ENCODE measurements at regions of chr3 and their contacts with region 1.

Region 1: GRCh38 chr3:10224784-10225665 is 23.2 kb upstream of the TATDN2 start:
- DNase-seq: peak; percentile 59 to 67 (median 60)
- H3K4me3 ChIP-seq: no peak overlapping the region
- H3K4me3 Mint-ChIP-seq: peak overlapping the region in 7 of 8 donors; percentile 49 to 83 (median 65)
- H3K27ac ChIP-seq: no peak overlapping the region
- H3K27ac Mint-ChIP-seq: peak overlapping the region; percentile 70 to 95 (median 91)
- H3K4me1 ChIP-seq: peaks cover 76% of the 10 kb centered on the region
- H3K4me1 Mint-ChIP-seq: peaks cover 47 to 79% (median 59%) of the 10 kb centered on the region in 4 donors
- H3K27me3 ChIP-seq: no peaks in the 10 kb centered on the region
- H3K27me3 Mint-ChIP-seq: no peaks in the 10 kb centered on the region

Region 2: GRCh38 chr3:9986237-9986725 is 238.7 kb before region 1 on chr3:
- CTCF ChIA-PET with region 1: interaction called, 4 read pairs
- POLR2A ChIA-PET with region 1: no interaction called
- intact Hi-C with region 1: loop called (anchors 2 kb)
- DNase-seq: no peak
- H3K4me3 ChIP-seq: peak overlapping the region; percentile 90 to 91
- H3K4me3 Mint-ChIP-seq: peak overlapping the region; percentile 95 to 99 (median 98)
- H3K27ac ChIP-seq: peak overlapping the region; percentile 96
- H3K27ac Mint-ChIP-seq: peak overlapping the region; percentile 98 to 100 (median 99)
- H3K4me1 ChIP-seq: peaks cover 31% of the 10 kb centered on the region
- H3K4me1 Mint-ChIP-seq: peaks cover 11 to 38% (median 27%) of the 10 kb centered on the region in 4 donors
- H3K27me3 ChIP-seq: no peaks in the 10 kb centered on the region
- H3K27me3 Mint-ChIP-seq: no peaks in the 10 kb centered on the region

Region 3: DNA sequence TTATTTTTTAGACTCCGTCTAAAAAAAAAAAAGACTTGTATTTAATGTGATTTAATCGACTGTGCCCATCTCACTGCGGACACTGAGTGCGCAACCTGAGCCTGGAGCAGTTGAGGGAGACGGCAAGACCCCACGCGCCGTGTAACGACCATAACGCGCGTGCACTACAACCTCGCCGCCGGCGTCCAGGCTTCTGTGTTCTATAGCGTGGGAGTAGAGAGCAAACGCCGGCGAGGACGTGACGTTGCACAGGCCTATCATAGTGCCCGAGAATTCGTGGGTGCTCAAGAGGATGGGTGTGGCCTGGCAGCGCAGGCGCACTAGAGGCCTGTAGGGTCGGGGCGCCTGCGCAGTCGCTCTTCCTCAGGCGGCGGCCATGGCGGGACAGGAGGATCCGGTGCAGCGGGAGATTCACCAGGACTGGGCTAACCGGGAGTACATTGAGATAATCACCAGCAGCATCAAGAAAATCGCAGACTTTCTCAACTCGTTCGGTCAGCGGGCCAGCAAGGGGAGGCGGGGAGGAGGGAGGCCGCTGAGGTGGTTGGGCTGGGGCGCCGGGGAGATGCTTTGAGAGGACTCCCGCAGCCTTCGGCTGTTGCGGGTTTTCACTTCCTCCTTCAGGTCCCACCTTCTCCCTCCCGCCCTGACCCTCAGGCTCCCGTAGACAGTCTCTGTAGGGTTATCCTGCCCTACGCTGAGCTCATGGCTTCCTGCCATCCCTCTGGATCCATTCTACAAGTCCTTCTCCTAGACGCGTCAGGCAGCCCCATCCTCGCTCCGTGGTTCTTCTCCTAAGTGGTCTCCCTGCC is 109.5 kb before region 1 on chr3 and contains the start of gene BRK1:
- CTCF ChIA-PET with region 1: interaction called, 3 read pairs
- POLR2A ChIA-PET with region 1: no interaction called
- intact Hi-C with region 1: loop called (anchors 1 kb)
- DNase-seq: peak; percentile 89 to 95 (median 93)
- H3K4me3 ChIP-seq: peak within 1 kb of the TSS; percentile 89 to 98
- H3K4me3 Mint-ChIP-seq: peak within 1 kb of the TSS; percentile 95 to 100 (median 99)
- H3K27ac ChIP-seq: peak within 1 kb of the TSS; percentile 84
- H3K27ac Mint-ChIP-seq: peak within 1 kb of the TSS; percentile 96 to 100 (median 98)
- H3K4me1 ChIP-seq: peaks cover 39% of the 10 kb centered on the region
- H3K4me1 Mint-ChIP-seq: peaks cover 22 to 52% (median 31%) of the 10 kb centered on the region in 4 donors
- H3K27me3 ChIP-seq: no peaks in the 10 kb centered on the region
- H3K27me3 Mint-ChIP-seq: peaks cover 0 to 1% of the 10 kb centered on the region in 2 donors
- total RNA-seq, gene BRK1: 73.0 to 78.1 TPM

Region 4: GRCh38 chr3:10164546-10165393 is 60.3 kb before region 1 on chr3 and contains the start of gene IRAK2:
- CTCF ChIA-PET with region 1: interaction called, 51 read pairs
- POLR2A ChIA-PET with region 1: interaction called, 23 read pairs
- intact Hi-C with region 1: loop called (anchors 1 kb)
- DNase-seq: peak; percentile 54 to 67 (median 59)
- H3K4me3 ChIP-seq: peak within 1 kb of the TSS; percentile 23 to 74
- H3K4me3 Mint-ChIP-seq: peak within 1 kb of the TSS; percentile 87 to 96 (median 90)
- H3K27ac ChIP-seq: peak within 1 kb of the TSS; percentile 74
- H3K27ac Mint-ChIP-seq: peak within 1 kb of the TSS; percentile 29 to 93 (median 81)
- H3K4me1 ChIP-seq: peaks cover 16% of the 10 kb centered on the region
- H3K4me1 Mint-ChIP-seq: peaks cover 12 to 32% (median 25%) of the 10 kb centered on the region in 4 donors
- H3K27me3 ChIP-seq: no peaks in the 10 kb centered on the region
- H3K27me3 Mint-ChIP-seq: no peaks in the 10 kb centered on the region
- total RNA-seq, gene IRAK2: 4.8 to 5.3 TPM

Region 5: GRCh38 chr3:10192953-10193691 is 31.9 kb before region 1 on chr3:
- CTCF ChIA-PET with region 1: interaction called, 20 read pairs
- POLR2A ChIA-PET with region 1: interaction called, 80 read pairs
- intact Hi-C with region 1: loop called (anchors 2 kb)
- DNase-seq: peak; percentile 54 to 77 (median 56)
- H3K4me3 ChIP-seq: peak overlapping the region in 1 of 2 donors; percentile 33
- H3K4me3 Mint-ChIP-seq: peak overlapping the region; percentile 69 to 89 (median 82)
- H3K27ac ChIP-seq: peak overlapping the region; percentile 87
- H3K27ac Mint-ChIP-seq: peak overlapping the region; percentile 98 to 100 (median 99)
- H3K4me1 ChIP-seq: peaks cover 92% of the 10 kb centered on the region
- H3K4me1 Mint-ChIP-seq: peaks cover 64 to 90% (median 77%) of the 10 kb centered on the region in 4 donors
- H3K27me3 ChIP-seq: no peaks in the 10 kb centered on the region
- H3K27me3 Mint-ChIP-seq: no peaks in the 10 kb centered on the region

Region 6: DNA sequence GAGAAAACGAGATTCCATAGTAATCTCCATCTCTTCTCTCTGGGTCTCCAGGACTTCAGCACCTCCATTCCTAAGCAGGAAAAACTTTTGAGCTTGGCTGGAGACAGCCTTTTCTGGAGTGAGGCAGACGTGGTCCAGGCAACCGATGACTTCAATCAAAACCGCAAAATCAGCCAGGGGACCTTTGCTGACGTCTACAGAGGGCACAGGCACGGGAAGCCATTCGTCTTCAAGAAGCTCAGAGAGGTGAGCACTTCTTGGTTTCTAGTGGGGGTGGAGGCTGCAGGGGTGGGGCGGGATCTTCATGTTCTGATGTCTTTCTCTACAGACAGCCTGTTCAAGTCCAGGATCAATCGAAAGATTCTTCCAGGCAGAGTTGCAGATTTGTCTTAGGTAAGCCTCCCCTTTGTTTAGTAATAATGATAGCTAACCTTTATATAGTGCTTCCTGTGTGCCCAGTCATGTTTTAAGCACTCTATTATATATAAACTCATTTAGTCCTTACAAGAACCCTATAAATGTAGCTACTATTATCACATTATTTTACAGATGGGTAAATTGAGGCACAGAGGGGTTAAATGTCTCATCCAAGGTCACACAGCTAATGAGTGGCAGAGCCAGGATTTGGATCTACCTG is 11.8 kb before region 1 on chr3:
- CTCF ChIA-PET with region 1: interaction called, 12 read pairs
- POLR2A ChIA-PET with region 1: no interaction called
- intact Hi-C with region 1: no loop called
- DNase-seq: no peak
- H3K4me3 ChIP-seq: no peak overlapping the region
- H3K4me3 Mint-ChIP-seq: no peak overlapping the region
- H3K27ac ChIP-seq: no peak overlapping the region
- H3K27ac Mint-ChIP-seq: peak overlapping the region in 3 of 7 donors; percentile 47 to 74 (median 53)
- H3K4me1 ChIP-seq: no peaks in the 10 kb centered on the region
- H3K4me1 Mint-ChIP-seq: peaks cover 0 to 6% (median 0%) of the 10 kb centered on the region in 4 donors
- H3K27me3 ChIP-seq: no peaks in the 10 kb centered on the region
- H3K27me3 Mint-ChIP-seq: no peaks in the 10 kb centered on the region

Region 7: DNA sequence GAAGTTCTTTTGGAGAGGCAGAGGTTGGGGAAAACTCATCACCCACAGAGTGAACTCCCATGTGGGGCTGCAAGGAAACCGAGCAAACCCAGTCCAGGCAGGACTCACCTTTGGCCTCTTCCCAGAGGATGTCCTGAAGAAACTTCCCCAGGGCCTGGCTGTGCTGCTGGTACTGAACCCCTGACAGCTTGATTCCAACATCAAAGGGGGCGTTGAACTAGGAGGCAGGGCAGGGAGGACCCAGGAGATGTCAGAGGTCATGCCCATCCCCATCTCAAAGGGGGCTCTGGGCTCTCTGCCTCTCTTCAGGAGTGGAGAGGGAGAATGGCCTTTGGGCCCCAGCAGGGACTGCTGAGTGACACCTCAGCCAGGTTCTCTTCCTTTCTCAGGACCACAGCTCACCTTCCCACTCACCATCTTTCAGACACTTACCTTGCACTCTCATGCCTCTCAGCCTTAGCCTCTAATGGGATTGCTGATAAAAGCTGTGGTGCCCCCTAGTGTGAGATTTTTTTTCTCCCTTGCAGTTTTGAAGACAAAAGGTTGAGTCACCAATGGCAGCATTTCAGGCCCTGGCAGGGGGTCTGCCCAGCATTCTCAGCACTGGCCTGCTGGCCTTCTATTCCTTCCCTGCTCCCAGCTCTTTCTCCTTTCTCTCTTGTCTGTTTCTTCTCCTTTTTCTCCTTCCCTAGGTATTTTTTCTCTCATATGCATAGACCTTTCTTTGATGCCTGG is 61.7 kb after region 1 on chr3:
- CTCF ChIA-PET with region 1: no interaction called
- POLR2A ChIA-PET with region 1: no interaction called
- intact Hi-C with region 1: loop called (anchors 1 kb)
- DNase-seq: peak in 3 of 5 donors; percentile 66 to 72 (median 66)
- H3K4me3 ChIP-seq: no peak overlapping the region
- H3K4me3 Mint-ChIP-seq: no peak overlapping the region
- H3K27ac ChIP-seq: no peak overlapping the region
- H3K27ac Mint-ChIP-seq: peak overlapping the region; percentile 2 to 57 (median 43)
- H3K4me1 ChIP-seq: peaks cover 23% of the 10 kb centered on the region
- H3K4me1 Mint-ChIP-seq: peaks cover 26 to 45% (median 29%) of the 10 kb centered on the region in 4 donors
- H3K27me3 ChIP-seq: no peaks in the 10 kb centered on the region
- H3K27me3 Mint-ChIP-seq: no peaks in the 10 kb centered on the region

Measured in CD4-positive, alpha-beta memory T cell (primary cell).